ENCODE measurements at regions of chr10 and their contacts with region 1.

Region 1: DNA sequence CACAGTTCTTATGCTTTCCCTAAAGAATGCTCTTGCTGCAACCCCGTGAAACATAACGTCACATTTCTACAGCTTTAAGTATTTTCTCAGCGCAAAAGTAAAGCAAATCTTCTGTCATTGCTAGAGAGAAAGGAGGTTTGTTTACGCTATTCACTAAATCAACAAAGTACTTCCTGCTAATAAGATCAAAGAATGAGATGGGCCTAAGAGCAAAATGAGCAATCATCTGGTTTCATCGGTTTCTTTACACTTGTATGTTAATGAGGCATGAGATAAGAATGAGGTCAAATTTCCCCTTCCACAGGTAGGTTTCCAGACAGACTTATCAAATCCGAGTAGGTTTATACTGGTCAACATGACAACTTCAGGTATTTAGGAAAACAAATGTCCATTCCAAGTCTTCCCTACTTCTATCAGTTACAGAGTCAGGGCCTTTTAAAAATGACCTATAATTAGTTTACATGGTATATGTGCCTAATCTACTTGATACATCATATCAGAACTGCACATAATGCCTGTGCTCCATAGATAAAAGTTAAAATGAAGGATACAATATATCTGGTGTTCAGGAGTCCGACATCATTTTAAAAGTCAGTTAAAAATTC is 8.4 kb downstream of the USP6NL start:
- DNase-seq: peak in 1 of 2 experiments; percentile 94
- H3K4me3 ChIP-seq: peak overlapping the region; percentile 31; the same call in 1 of the 2 replicates
- H3K27ac ChIP-seq: peak overlapping the region; percentile 90
- H3K4me1 ChIP-seq: peaks cover 29% of the 10 kb centered on the region
- H3K27me3 ChIP-seq: no peaks in the 10 kb centered on the region
- CTCF ChIP-seq: no peak

Region 2: DNA sequence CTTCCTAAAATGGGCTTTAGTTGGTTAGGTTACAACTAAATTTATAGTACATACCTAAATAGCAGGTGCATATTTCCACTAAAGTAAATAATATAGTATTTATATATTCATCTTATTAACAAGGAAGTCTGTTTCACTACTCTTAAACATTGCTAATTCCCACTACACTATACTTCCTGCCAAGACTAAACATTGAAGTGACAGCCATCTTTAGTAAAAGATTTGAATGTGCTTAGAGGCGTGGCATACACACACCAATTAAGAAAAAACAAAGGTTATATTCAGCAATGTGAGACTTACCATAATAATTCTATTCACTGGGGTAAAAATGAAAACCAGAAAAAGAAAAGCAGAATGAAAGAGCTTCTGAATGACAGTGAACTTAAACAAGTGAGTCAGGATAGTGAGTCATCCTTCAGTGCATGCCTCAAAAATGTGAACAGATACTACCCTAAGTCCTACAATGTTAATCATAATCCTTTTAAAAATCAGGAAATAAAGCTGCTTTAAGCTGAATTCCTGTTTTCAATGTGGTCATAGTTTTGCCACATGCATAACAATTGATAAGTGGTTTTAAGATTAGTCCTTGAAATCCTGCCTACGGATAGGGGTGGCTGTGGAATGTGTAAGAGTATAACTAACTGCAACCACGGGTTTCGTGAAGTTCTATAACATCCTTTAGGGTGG is 51.0 kb before region 1 on chr10:
- CTCF ChIA-PET with region 1: no interaction called
- POLR2A ChIA-PET with region 1: interaction called, 8 read pairs
- intact Hi-C with region 1: loop called (anchors 2 kb)
- DNase-seq: peak; percentile 32 to 95
- H3K4me3 ChIP-seq: peak overlapping the region; percentile 21; the same call in 1 of the 2 replicates
- H3K27ac ChIP-seq: peak overlapping the region; percentile 99
- H3K4me1 ChIP-seq: peaks cover 30% of the 10 kb centered on the region
- H3K27me3 ChIP-seq: no peaks in the 10 kb centered on the region
- CTCF ChIP-seq: no peak

Region 3: GRCh38 chr10:11631890-11632587 is 29.0 kb after region 1 on chr10:
- CTCF ChIA-PET with region 1: no interaction called
- POLR2A ChIA-PET with region 1: no interaction called
- intact Hi-C with region 1: no loop called
- DNase-seq: no peak
- H3K4me3 ChIP-seq: no peak overlapping the region
- H3K27ac ChIP-seq: no peak overlapping the region
- H3K4me1 ChIP-seq: no peaks in the 10 kb centered on the region
- H3K27me3 ChIP-seq: no peaks in the 10 kb centered on the region
- CTCF ChIP-seq: no peak